Naive thymus-derived CD4-positive, alpha-beta T cell (primary cell): ENCODE measurements at regions of chr9 and their contacts with region 1.

Region 1: GRCh38 chr9:130693426-130694191 is at the start of gene EXOSC2:
- DNase-seq: peak; percentile 76 to 99 (median 89)
- ATAC-seq: peak; percentile 100
- H3K4me3 ChIP-seq: peak within 1 kb of the TSS; percentile 91
- H3K4me3 Mint-ChIP-seq: peak within 1 kb of the TSS; percentile 83 to 98 (median 95)
- H3K27ac ChIP-seq: peak within 1 kb of the TSS; percentile 85
- H3K27ac Mint-ChIP-seq: peak within 1 kb of the TSS; percentile 88 to 97 (median 94)
- H3K4me1 ChIP-seq: peaks cover 13 to 20% of the 10 kb centered on the region in 2 donors
- H3K4me1 Mint-ChIP-seq: peaks cover 20 to 54% (median 46%) of the 10 kb centered on the region in 7 donors
- H3K27me3 ChIP-seq: no peaks in the 10 kb centered on the region
- H3K27me3 Mint-ChIP-seq: no peaks in the 10 kb centered on the region
- total RNA-seq, gene EXOSC2: 44.2 to 60.7 (median 59.5) TPM

Region 2: GRCh38 chr9:130578865-130579737 is 114.5 kb before region 1 on chr9 and contains the start of gene FUBP3:
- CTCF ChIA-PET with region 1: no interaction called
- POLR2A ChIA-PET with region 1: no interaction called
- intact Hi-C with region 1: loop called (anchors 1 to 2 kb)
- DNase-seq: peak; percentile 63 to 93 (median 78)
- ATAC-seq: peak; percentile 92
- H3K4me3 ChIP-seq: peak within 1 kb of the TSS; percentile 99
- H3K4me3 Mint-ChIP-seq: peak within 1 kb of the TSS; percentile 87 to 97 (median 92)
- H3K27ac ChIP-seq: peak within 1 kb of the TSS; percentile 85
- H3K27ac Mint-ChIP-seq: peak within 1 kb of the TSS; percentile 78 to 98 (median 92)
- H3K4me1 ChIP-seq: peaks cover 6 to 15% of the 10 kb centered on the region in 2 donors
- H3K4me1 Mint-ChIP-seq: peaks cover 22 to 58% (median 54%) of the 10 kb centered on the region in 7 donors
- H3K27me3 ChIP-seq: no peaks in the 10 kb centered on the region
- H3K27me3 Mint-ChIP-seq: peaks cover 0 to 5% (median 0%) of the 10 kb centered on the region in 5 donors
- total RNA-seq, gene FUBP3: 34.3 to 49.6 (median 40.5) TPM

Region 3: DNA sequence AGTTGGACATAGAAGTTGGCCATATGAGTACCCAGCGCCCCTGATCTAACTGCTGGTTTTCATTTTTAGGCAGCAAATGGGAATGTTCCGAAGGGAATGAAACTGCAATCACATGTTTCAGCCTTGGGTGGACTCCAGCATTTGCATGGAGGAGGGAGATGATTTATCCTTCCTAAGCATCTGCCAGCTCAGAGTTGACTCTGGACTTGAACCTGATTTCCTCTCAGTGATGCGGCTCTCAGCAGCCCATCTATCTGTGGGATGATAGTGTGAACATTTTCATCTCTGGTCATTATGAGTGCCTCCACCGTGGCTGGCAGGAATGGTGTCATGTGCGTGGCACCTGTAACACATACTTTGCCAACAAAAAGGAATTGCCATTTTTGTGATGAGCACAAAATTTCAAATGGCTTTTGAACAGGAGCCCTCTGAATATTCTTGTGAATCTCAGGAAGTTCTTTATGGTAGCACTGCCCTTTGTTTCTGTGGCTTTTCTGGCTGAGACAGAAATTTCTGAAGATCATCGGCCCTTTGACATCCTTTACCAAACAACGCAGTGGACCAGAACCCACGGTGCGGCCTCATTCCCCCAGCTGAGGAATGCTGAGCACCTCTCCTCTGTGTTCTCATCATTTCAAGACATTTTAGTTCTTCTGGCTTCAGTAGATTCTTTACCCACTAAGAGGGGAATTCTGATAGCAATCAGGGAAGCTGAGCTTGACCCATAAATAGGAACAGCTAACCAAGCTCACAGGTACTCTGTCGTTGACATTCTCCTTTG is 85.8 kb before region 1 on chr9:
- CTCF ChIA-PET with region 1: no interaction called
- POLR2A ChIA-PET with region 1: no interaction called
- intact Hi-C with region 1: no loop called
- DNase-seq: no peak
- ATAC-seq: no peak
- H3K4me3 ChIP-seq: no peak overlapping the region
- H3K4me3 Mint-ChIP-seq: no peak overlapping the region
- H3K27ac ChIP-seq: no peak overlapping the region
- H3K27ac Mint-ChIP-seq: peak overlapping the region in 1 of 9 donors; percentile 43
- H3K4me1 ChIP-seq: no peaks in the 10 kb centered on the region
- H3K4me1 Mint-ChIP-seq: peaks cover 0 to 7% (median 4%) of the 10 kb centered on the region in 7 donors
- H3K27me3 ChIP-seq: no peaks in the 10 kb centered on the region
- H3K27me3 Mint-ChIP-seq: no peaks in the 10 kb centered on the region